Posterior vena cava (tissue), 2 donors: ENCODE measurements at regions of chr2 and their contacts with region 1.

Region 1: GRCh38 chr2:31333527-31334183 is 80.9 kb downstream of the XDH start:
- DNase-seq: peak; percentile 91

Region 2: GRCh38 chr2:31168291-31168690 is 165.4 kb before region 1 on chr2:
- intact Hi-C with region 1: loop called in 1 of 2 experiments (anchors 10 kb)
- DNase-seq: no peak

Region 3: GRCh38 chr2:31233741-31234682 is 99.6 kb before region 1 on chr2 and contains the start of gene EHD3:
- intact Hi-C with region 1: loop called (anchors 5 to 10 kb)
- DNase-seq: peak; percentile 94
- total RNA-seq, gene EHD3: 17.4 to 28.7 TPM

Region 4: GRCh38 chr2:31736695-31737454 is 403.2 kb after region 1 on chr2:
- intact Hi-C with region 1: no loop called
- DNase-seq: no peak